SK-N-SH (cell line): ENCODE measurements at regions of chr9 and their contacts with region 1.

Region 1: GRCh38 chr9:124420991-124421543 is 5.8 kb upstream of the PSMB7 start:
- DNase-seq: no peak
- H3K4me3 ChIP-seq: no peak overlapping the region
- H3K27ac ChIP-seq: no peak overlapping the region
- H3K4me1 ChIP-seq: peaks cover 0 to 4% of the 10 kb centered on the region in 2 experiments; a peak in 1 of 4 replicates
- H3K27me3 ChIP-seq: no peaks in the 10 kb centered on the region
- CTCF ChIP-seq: no peak
- EP300 ChIP-seq: no peak
- RAD21 ChIP-seq: no peak

Region 2: GRCh38 chr9:124088476-124088837 is 332.6 kb before region 1 on chr9:
- CTCF ChIA-PET with region 1: no interaction called
- POLR2A ChIA-PET with region 1: no interaction called
- DNase-seq: no peak
- H3K4me3 ChIP-seq: no peak overlapping the region
- H3K27ac ChIP-seq: no peak overlapping the region
- H3K4me1 ChIP-seq: no peaks in the 10 kb centered on the region
- H3K27me3 ChIP-seq: peaks cover 4% of the 10 kb centered on the region; the same call in 1 of the 2 replicates
- CTCF ChIP-seq: no peak
- EP300 ChIP-seq: no peak
- RAD21 ChIP-seq: no peak

Region 3: GRCh38 chr9:124392871-124393460 is 28.1 kb before region 1 on chr9:
- CTCF ChIA-PET with region 1: interaction called, 12 read pairs
- POLR2A ChIA-PET with region 1: no interaction called
- DNase-seq: peak; percentile 77
- H3K4me3 ChIP-seq: peak overlapping the region in 1 of 2 experiments; percentile 28; a peak in 2 of 4 replicates
- H3K27ac ChIP-seq: peak overlapping the region; percentile 76 to 90
- H3K4me1 ChIP-seq: peaks cover 42 to 51% of the 10 kb centered on the region in 2 experiments
- H3K27me3 ChIP-seq: no peaks in the 10 kb centered on the region
- CTCF ChIP-seq: peak; percentile 69
- EP300 ChIP-seq: peak; percentile 41 to 96
- RAD21 ChIP-seq: peak; percentile 72

Region 4: GRCh38 chr9:124441291-124441690 is 20.2 kb after region 1 on chr9:
- CTCF ChIA-PET with region 1: interaction called, 12 read pairs
- POLR2A ChIA-PET with region 1: no interaction called
- DNase-seq: no peak
- H3K4me3 ChIP-seq: no peak overlapping the region
- H3K27ac ChIP-seq: no peak overlapping the region
- H3K4me1 ChIP-seq: no peaks in the 10 kb centered on the region
- H3K27me3 ChIP-seq: no peaks in the 10 kb centered on the region
- CTCF ChIP-seq: no peak
- EP300 ChIP-seq: no peak
- RAD21 ChIP-seq: no peak

Region 5: GRCh38 chr9:124522121-124523098 is 101.3 kb after region 1 on chr9:
- CTCF ChIA-PET with region 1: interaction called, 16 read pairs
- POLR2A ChIA-PET with region 1: no interaction called
- DNase-seq: no peak
- H3K4me3 ChIP-seq: no peak overlapping the region
- H3K27ac ChIP-seq: no peak overlapping the region
- H3K4me1 ChIP-seq: peaks cover 0 to 15% of the 10 kb centered on the region in 2 experiments; a peak in 1 of 4 replicates
- H3K27me3 ChIP-seq: no peaks in the 10 kb centered on the region
- CTCF ChIP-seq: no peak
- EP300 ChIP-seq: no peak
- RAD21 ChIP-seq: no peak

Region 6: DNA sequence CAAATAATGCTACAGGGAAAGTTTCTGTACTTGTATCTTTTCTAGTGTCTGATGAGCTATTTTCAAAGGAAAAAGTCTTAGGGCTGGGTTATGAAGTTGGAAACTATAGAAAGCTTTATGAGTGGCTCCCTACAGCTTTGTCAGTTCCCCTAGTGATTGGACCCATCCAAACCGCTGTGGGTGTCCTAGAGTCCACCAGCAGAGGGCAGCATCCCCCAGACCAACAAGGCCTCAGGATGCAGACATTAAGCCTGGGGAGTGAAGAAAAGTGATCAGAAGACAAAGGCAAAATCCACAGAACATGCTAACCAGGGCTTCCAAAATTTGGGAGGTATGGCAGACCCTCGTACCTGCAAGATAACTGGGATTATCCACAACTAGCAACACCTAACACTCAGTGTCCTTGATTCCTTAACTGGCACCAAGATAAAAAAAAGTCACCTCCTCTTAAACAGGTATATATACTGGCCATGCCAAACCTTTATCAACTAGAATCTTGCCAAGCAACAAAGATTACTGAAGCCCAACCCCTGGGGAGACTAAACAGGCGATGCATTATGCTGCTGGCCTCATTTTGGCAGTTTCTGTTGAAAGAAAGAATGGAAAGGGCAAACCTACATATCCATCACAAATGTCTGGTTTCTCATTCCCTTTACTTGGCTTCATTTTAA is 196.5 kb after region 1 on chr9:
- CTCF ChIA-PET with region 1: no interaction called
- POLR2A ChIA-PET with region 1: no interaction called
- DNase-seq: peak; percentile 78
- H3K4me3 ChIP-seq: no peak overlapping the region; a peak in 1 of 4 replicates
- H3K27ac ChIP-seq: no peak overlapping the region
- H3K4me1 ChIP-seq: peaks cover 8 to 10% of the 10 kb centered on the region in 2 experiments
- H3K27me3 ChIP-seq: no peaks in the 10 kb centered on the region
- CTCF ChIP-seq: peak; percentile 95
- EP300 ChIP-seq: no peak
- RAD21 ChIP-seq: peak; percentile 99

Region 7: DNA sequence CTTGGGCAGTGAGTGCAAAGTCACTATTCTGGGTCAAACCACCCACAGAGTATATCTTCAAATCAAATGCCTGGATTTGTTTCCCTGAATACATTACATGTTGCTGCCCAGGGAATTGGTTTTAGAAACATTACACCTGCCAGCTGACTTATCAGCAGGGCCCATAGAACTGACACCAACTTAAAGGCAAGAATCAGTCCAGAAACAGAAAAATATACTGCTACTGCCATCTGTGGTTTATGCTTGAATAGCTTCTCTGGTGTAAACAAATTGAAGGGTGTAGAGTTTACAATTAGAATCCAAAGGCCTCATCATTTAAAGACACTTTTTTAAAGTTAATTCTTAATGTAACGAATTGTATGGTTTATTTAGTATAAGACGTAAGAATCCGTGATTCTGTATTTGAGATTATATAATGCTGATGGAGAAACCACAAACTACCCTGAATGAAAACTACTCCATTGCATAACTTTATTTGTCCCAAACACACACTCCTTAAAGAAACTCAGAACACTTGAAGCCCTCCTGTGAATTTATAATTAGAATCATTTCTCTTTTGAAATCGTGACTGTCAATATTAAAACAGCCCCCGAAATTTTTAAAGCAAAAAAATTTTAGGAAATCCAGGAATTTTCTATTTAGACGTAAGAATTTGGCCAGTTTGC is 343.8 kb after region 1 on chr9:
- CTCF ChIA-PET with region 1: interaction called, 16 read pairs
- POLR2A ChIA-PET with region 1: no interaction called
- DNase-seq: no peak
- H3K4me3 ChIP-seq: no peak overlapping the region
- H3K27ac ChIP-seq: no peak overlapping the region
- H3K4me1 ChIP-seq: peaks cover 8 to 16% of the 10 kb centered on the region in 2 experiments; a peak in 3 of 4 replicates
- H3K27me3 ChIP-seq: no peaks in the 10 kb centered on the region
- CTCF ChIP-seq: peak; percentile 56
- EP300 ChIP-seq: no peak
- RAD21 ChIP-seq: peak; percentile 65